Sigmoid colon (tissue), 7 donors: ENCODE measurements at regions of chr7 and their contacts with region 1.

Region 1: DNA sequence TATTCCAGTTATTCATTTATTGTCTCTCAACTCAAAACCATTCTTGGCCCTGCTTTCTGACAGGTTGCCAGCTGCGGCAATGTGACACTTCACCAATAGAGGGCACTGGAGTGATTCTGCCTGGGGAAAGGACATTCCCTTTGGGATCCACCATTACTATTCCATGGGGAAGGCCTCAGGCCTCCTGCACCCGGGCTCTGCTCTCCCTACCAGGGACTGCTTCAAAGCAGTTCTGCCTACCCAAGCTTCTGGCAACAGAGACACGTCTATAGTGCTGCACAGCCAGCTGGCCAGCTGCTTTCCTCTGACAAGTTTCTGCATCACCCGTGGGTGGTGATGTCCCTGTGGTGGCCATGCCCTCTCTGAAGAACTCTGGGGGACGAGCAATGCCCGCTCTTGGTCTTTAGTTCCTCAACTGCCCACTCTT is 163.8 kb downstream of the ELMO1 start:
- DNase-seq: peak; percentile 69
- H3K4me3 ChIP-seq: no peak overlapping the region
- H3K27ac ChIP-seq: peak overlapping the region in 1 of 4 donors; percentile 7
- H3K4me1 ChIP-seq: peaks cover 0 to 28% (median 4%) of the 10 kb centered on the region in 4 donors
- H3K27me3 ChIP-seq: no peaks in the 10 kb centered on the region
- CTCF ChIP-seq: peak in 2 of 4 experiments; percentile 12 to 31
- EP300 ChIP-seq: no peak
- POLR2A ChIP-seq: no peak

Region 2: GRCh38 chr7:37211097-37211880 is 73.5 kb before region 1 on chr7:
- intact Hi-C with region 1: loop called (anchors 10 kb)
- DNase-seq: peak; percentile 84
- H3K4me3 ChIP-seq: no peak overlapping the region
- H3K27ac ChIP-seq: peak overlapping the region; percentile 18 to 60 (median 42)
- H3K4me1 ChIP-seq: peaks cover 0 to 32% (median 19%) of the 10 kb centered on the region in 4 donors
- H3K27me3 ChIP-seq: no peaks in the 10 kb centered on the region
- CTCF ChIP-seq: no peak
- EP300 ChIP-seq: no peak
- POLR2A ChIP-seq: no peak

Region 3: DNA sequence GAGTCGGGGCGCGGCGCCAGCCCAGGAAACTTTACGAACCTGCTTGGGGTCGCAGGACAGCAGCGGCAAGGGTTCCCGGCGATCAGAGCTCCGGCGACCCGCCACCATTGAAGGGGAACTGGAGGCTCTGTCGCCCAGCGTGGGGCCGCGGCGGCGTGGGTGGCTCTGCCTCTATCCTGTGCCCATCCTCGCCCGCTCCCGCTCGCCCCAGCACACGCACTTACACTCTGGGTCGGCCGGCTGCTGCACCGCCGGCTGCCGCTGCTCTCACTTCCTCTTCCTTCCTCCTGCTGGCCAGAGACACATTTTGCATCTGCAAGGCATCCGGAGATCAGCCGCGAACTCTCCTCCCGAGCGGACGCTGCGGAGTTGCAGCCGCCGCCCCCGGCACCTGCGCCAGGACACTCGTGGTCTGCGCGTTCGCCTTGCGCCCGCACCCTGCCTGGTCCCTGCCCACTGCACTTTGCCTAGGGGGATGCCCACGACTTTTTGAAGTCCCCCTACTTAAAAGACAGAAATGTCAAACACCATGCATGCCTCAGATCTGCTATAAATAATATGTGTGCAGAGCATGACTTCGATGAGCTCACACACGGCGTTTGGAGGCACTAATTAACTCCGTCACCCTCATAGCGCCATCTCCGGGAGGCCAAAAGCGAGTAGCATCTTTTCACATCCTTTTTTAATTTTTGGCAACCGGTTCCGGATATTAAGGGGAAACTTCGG is 164.0 kb after region 1 on chr7 and contains the start of gene ELMO1:
- intact Hi-C with region 1: loop called (anchors 10 kb)
- DNase-seq: peak; percentile 87
- H3K4me3 ChIP-seq: peak within 1 kb of the TSS; percentile 54 to 76 (median 66)
- H3K27ac ChIP-seq: peak within 1 kb of the TSS; percentile 73 to 89 (median 82)
- H3K4me1 ChIP-seq: peaks cover 0 to 18% (median 16%) of the 10 kb centered on the region in 4 donors
- H3K27me3 ChIP-seq: peaks cover 6 to 51% (median 19%) of the 10 kb centered on the region in 3 donors
- CTCF ChIP-seq: peak; percentile 13 to 38 (median 26)
- EP300 ChIP-seq: no peak
- POLR2A ChIP-seq: peak; percentile 10 to 13
- total RNA-seq, gene ELMO1: 33.9 to 63.1 (median 41.5) TPM